ENCODE measurements at regions of chr13 and their contacts with region 1.

Region 1: DNA sequence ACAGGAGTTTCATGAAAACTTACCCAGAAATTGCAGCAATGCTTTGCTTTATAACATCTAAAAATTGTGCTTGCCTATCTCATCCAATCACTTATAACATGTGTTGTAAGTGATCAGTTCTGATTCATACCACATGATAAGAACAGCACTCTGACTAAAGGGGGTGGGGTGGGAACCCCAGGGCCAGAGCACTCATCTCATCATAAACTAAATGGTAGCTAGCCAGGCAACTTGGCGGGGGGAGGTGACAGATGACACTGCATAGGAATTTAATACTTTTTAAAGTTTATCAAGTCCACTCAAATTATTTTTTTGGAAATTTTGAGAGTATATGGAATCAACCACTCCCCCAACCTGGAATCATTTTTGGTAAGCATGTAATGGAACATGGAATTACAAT is 42.1 kb downstream of the FOXO1 start:
- DNase-seq: no peak
- H3K4me3 ChIP-seq: no peak overlapping the region
- H3K27me3 ChIP-seq: no peaks in the 10 kb centered on the region
- CTCF ChIP-seq: no peak

Region 2: DNA sequence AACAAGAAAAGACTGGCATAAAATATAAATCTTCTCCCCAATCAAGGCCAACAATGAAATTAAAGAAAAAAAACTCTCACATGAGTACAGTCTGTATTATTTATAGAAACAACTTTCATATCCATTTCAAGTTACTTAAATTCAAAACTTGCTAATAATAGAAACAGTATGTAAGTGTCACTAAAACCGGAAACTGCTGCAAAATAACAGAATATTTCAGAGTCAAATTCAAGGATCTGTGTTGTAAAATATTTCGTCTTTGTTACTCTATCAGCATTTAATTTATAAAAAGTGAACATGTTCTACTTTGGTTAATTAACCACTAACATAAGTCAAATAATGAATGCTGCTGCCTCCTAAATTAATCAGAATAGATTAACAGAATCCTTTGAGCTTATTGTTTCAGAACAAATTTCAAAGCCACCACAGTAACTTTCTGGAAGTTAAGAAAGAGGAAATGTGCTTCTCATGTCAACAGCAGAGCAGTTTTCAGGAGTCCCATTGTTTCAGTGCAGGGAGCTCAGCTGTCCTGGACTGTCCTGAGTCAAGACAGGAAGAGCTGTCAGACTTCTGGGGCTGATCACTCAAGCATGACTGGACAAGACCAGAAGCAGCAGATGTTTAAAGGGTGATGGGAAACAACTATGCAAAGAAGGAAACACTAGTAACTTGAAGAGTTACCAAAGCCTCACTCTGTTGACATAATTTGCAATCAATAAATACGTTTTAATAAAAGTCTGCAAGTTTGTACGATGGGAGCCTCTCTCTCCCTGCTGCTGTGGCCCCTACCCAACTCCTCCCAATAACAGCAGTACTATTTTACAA is 34.9 kb before region 1 on chr13:
- CTCF ChIA-PET with region 1: no interaction called
- POLR2A ChIA-PET with region 1: interaction called, 21 read pairs
- DNase-seq: no peak
- H3K4me3 ChIP-seq: no peak overlapping the region
- H3K27me3 ChIP-seq: no peaks in the 10 kb centered on the region
- CTCF ChIP-seq: no peak

Measured in BJ (cell line).